Heart left ventricle (tissue), 16 donors: ENCODE measurements at regions of chr22 and their contacts with region 1.

Region 1: GRCh38 chr22:24106385-24107381 is 74.6 kb upstream of the SUSD2 start:
- DNase-seq: peak in 2 of 5 donors; percentile 28 to 51
- ATAC-seq: peak in 2 of 4 donors; percentile 8 to 21
- H3K4me3 ChIP-seq: no peak overlapping the region
- H3K27ac ChIP-seq: peak overlapping the region in 9 of 12 donors; percentile 14 to 68 (median 57)
- H3K4me1 ChIP-seq: peaks cover 0 to 48% (median 23%) of the 10 kb centered on the region in 12 donors
- H3K27me3 ChIP-seq: no peaks in the 10 kb centered on the region
- CTCF ChIP-seq: peak in 8 of 12 donors; percentile 12 to 46 (median 30)
- POLR2A ChIP-seq: no peak

Region 2: DNA sequence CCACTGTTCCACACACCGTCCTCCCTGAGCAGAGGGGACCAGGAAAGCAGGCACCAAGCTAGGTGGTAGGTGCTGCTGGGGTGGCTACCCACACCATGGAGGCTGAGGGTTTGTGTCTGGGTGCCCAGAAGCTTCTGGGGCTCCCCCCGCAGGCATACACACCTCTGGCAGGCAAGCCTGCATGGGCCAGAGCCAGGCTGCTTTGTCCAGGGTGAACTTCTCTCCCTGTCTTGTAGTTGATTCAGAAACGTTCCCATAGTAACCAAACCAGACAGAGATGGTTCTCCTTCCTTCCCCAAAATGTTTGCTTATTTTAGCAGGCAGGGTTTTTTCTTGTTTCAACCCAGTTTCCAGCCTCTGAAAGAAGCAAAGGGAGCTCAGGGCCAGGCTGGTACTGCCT is 33.7 kb after region 1 on chr22:
- intact Hi-C with region 1: loop called in 1 of 10 experiments (anchors 5 kb)
- DNase-seq: no peak
- ATAC-seq: peak in 3 of 4 donors; percentile 15 to 49 (median 46)
- H3K4me3 ChIP-seq: no peak overlapping the region
- H3K27ac ChIP-seq: peak overlapping the region in 6 of 12 donors; percentile 17 to 74 (median 31)
- H3K4me1 ChIP-seq: peaks cover 7 to 73% (median 48%) of the 10 kb centered on the region in 12 donors
- H3K27me3 ChIP-seq: no peaks in the 10 kb centered on the region
- CTCF ChIP-seq: no peak
- POLR2A ChIP-seq: no peak

Region 3: DNA sequence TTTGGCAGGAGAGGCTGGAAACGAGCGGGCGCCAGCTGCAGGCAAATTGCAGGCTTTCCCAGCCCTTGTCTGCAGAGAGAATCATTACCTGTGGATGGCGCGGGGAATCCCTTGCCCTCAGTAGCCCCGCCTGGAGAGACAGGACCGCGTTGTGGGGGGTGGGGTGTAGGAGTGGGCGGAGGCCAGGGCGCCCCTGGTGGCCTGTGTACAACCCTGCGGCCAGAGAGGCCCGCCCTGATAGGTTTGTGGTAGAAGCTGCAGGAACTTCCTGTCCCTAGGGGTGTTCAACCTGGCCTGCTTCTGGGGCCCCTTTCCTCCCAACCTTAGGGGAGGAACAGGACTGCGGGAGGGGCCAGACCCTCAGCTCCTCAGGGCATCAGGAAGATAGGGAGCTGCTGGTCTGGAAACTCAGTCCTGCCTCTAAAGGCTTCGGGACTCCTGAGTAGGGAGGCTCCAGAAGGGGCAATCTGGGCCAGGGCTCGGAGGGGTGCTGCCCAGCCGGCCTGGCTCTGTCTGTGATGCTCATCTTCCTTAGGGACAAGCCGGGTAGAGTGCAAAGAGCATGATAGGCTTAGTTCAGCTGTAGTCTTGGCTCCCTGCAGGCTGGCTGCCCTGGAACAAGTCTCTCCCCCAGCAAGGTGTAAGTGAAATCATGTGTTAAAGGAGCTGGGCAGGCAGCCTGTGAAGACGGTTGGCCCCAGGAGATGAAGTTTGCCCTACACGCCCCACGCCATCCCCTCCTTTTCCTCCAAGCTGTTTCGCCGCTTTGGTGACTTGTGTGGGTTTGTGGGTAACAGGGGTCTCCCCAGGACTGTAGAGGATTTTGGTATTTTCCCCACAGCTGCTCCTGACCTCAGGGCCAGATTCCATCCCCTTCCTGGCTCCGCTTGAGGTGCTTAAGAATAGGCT is 50.5 kb after region 1 on chr22:
- intact Hi-C with region 1: loop called in 4 of 10 experiments (anchors 5 kb)
- DNase-seq: peak; percentile 82 to 91 (median 87)
- ATAC-seq: peak; percentile 79 to 88 (median 82)
- H3K4me3 ChIP-seq: peak overlapping the region; percentile 54 to 93 (median 76)
- H3K27ac ChIP-seq: peak overlapping the region in 11 of 12 donors; percentile 76 to 94 (median 86)
- H3K4me1 ChIP-seq: peaks cover 3 to 76% (median 55%) of the 10 kb centered on the region in 12 donors
- H3K27me3 ChIP-seq: no peaks in the 10 kb centered on the region
- CTCF ChIP-seq: peak; percentile 71 to 89 (median 81)
- POLR2A ChIP-seq: no peak

Region 4: DNA sequence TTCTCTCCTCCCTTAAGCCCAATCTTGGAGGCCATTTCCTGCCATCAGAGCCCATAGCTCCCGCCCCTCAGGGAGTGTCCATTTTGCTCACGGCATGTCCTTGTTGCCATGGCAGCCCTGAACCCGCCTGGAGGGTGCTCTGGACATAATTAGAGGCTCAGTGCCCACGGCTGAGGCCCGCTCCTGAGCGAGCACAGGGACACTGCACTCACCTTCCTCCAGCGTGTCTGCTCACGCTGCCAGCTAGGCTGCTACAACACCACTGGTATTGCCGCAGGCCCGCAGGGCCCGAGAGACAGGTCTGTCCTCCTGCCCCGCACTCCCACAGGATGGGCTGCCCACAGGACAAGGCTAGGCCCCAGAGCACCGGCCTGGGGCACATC is 63.6 kb after region 1 on chr22:
- intact Hi-C with region 1: loop called in 8 of 10 experiments (anchors 1 to 5 kb)
- DNase-seq: no peak
- ATAC-seq: no peak
- H3K4me3 ChIP-seq: no peak overlapping the region
- H3K27ac ChIP-seq: peak overlapping the region in 1 of 12 donors; percentile 54
- H3K4me1 ChIP-seq: peaks cover 0 to 34% (median 9%) of the 10 kb centered on the region in 12 donors
- H3K27me3 ChIP-seq: no peaks in the 10 kb centered on the region
- CTCF ChIP-seq: no peak
- POLR2A ChIP-seq: no peak

Region 5: DNA sequence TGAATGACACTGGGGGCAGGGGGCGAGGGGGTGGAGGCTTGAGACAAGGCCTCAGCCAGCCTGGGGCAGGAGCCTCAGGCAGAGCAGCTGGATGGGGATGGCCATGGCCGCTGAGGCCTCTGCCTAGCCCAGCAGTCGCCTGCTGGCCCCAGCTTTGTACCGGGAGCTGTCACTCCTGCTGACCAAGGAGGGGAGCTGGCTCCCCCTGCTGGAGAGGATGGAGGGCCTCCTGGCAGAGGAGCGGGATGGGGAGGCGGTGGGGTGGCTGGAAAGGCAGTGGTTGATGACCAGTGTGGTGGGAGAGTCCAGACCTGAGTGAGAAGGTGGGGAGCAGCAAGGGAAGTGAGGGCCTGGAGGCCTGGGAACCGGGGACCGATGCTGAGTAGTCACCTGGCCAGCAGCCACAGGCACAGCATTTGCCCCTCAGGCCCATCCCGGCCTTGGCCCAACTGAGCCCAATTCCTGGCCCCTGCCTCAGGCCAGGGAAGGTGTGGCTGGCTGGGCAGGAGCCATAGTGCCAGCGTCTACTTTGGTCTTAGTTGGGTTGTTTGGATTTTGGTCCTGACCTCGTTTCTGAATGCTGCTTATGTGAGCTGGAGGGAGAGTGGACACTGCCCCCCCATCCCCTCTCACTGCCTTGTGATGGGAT is 68.6 kb after region 1 on chr22:
- intact Hi-C with region 1: loop called in 8 of 10 experiments (anchors 1 to 5 kb)
- DNase-seq: peak; percentile 84 to 92 (median 90)
- ATAC-seq: peak; percentile 27 to 76 (median 66)
- H3K4me3 ChIP-seq: no peak overlapping the region
- H3K27ac ChIP-seq: peak overlapping the region; percentile 23 to 85 (median 70)
- H3K4me1 ChIP-seq: peaks cover 0 to 52% (median 25%) of the 10 kb centered on the region in 12 donors
- H3K27me3 ChIP-seq: no peaks in the 10 kb centered on the region
- CTCF ChIP-seq: peak; percentile 80 to 94 (median 88)
- POLR2A ChIP-seq: no peak

Region 6: DNA sequence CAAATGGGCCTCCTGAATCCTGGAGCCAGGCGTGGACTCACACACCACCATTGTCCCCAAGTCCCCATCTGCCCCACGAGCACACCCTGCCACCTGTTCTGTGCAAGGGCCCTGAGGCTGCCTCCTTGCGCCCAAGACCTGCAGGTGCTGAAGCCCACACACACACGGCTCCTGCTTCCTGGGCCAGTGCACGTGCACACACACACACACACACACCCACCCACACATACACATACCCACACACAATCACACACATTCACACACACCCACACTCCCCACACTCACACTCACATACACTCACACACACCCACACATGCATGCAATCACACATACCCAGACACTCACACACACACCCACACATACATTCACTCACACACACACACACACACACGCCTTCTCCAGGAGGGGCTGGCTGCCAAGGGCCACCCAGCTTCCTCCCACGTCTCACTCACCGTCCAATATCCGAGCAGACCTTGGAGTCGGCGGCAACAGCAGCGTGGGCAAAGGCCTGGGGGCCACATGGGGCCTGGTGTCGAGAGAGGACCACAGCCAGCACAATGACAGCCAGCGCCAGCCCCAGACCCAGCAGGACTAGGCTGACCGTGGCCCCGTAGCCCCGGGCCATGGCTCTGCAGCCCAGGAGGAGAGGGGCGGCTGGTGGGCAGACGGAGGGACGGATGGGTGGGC is 137.6 kb after region 1 on chr22:
- intact Hi-C with region 1: loop called in 2 of 10 experiments (anchors 5 to 10 kb)
- DNase-seq: peak in 3 of 5 donors; percentile 43 to 68 (median 65)
- ATAC-seq: peak; percentile 17 to 36 (median 22)
- H3K4me3 ChIP-seq: peak overlapping the region in 11 of 12 donors; percentile 21 to 65 (median 51)
- H3K27ac ChIP-seq: peak overlapping the region; percentile 72 to 97 (median 86)
- H3K4me1 ChIP-seq: peaks cover 5 to 68% (median 38%) of the 10 kb centered on the region in 12 donors
- H3K27me3 ChIP-seq: no peaks in the 10 kb centered on the region
- CTCF ChIP-seq: no peak
- POLR2A ChIP-seq: no peak